ENCODE measurements at regions of chr22 and their contacts with region 1.

Region 1: GRCh38 chr22:39959640-39960447 is at the start of gene TMA7B:
- DNase-seq: peak; percentile 31
- ATAC-seq: peak; percentile 96
- H3K4me3 Mint-ChIP-seq: no peak within 1 kb of the TSS
- H3K27ac Mint-ChIP-seq: peak within 1 kb of the TSS; percentile 37; the same call in 1 of the 2 replicates
- H3K4me1 Mint-ChIP-seq: peaks cover 38% of the 10 kb centered on the region
- H3K27me3 Mint-ChIP-seq: peaks cover 11% of the 10 kb centered on the region
- CTCF ChIP-seq: no peak
- total RNA-seq, gene TMA7B: not detected in 3 replicates

Region 2: GRCh38 chr22:40050258-40050657 is 90.4 kb after region 1 on chr22:
- CTCF ChIA-PET with region 1: no interaction called
- POLR2A ChIA-PET with region 1: no interaction called
- DNase-seq: no peak
- ATAC-seq: no peak
- H3K4me3 Mint-ChIP-seq: no peak overlapping the region
- H3K27ac Mint-ChIP-seq: no peak overlapping the region
- H3K4me1 Mint-ChIP-seq: peaks cover 20% of the 10 kb centered on the region
- H3K27me3 Mint-ChIP-seq: no peaks in the 10 kb centered on the region; the same call in 1 of the 2 replicates
- CTCF ChIP-seq: no peak

Region 3: DNA sequence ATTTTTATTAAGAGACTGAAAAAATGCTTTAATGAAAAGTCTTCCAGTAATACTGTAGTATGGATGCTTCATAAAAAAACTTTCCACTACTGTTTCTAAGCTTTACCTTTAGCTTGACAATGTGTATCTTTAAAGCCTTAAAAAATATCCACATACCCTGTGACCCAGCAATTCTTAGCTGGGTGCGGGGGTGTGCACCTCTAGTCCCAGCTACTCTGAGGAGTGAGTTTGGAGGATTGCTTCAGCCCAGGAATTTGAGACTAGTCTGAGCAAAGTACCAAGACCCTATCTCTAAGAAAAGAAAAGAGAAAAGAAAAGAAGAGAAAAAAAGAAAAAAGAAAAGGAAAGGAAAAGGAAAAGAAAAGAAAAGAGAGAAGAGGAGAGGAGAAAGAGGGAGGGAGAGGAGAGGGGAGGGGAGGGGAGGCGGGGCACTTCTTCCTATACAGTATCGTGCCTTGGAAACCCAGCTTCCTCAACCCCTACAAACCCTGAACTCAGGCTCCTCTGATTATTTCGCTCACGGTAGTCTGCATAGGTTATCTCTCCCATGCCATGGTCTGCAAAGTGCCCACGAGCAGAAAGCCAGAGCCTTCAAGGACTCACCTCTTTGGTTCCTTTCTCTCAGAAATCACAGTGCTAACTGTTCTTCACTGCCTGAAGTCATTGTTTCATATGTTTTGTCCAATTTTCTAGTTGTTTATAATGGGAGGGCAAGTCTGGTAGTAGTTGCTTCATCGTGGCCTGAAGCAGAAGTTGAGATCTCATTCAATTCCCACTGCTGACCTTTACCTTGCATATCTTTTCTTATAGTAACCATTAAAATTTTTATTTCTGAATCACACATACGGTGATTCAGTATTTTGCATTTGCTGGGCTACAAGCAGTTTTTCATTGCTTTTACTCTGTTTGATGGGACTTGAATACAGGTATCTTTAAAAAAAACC is 117.1 kb after region 1 on chr22:
- CTCF ChIA-PET with region 1: no interaction called
- POLR2A ChIA-PET with region 1: interaction called, 13 read pairs
- DNase-seq: no peak
- ATAC-seq: peak; percentile 65
- H3K4me3 Mint-ChIP-seq: peak overlapping the region; percentile 30; the same call in 1 of the 2 replicates
- H3K27ac Mint-ChIP-seq: peak overlapping the region; percentile 41; the same call in 1 of the 2 replicates
- H3K4me1 Mint-ChIP-seq: peaks cover 18% of the 10 kb centered on the region
- H3K27me3 Mint-ChIP-seq: no peaks in the 10 kb centered on the region
- CTCF ChIP-seq: no peak

Measured in WTC11 (cell line).